Cardiac septum (tissue), 1 donor: ENCODE measurements at regions of chr3 and their contacts with region 1.

Region 1: DNA sequence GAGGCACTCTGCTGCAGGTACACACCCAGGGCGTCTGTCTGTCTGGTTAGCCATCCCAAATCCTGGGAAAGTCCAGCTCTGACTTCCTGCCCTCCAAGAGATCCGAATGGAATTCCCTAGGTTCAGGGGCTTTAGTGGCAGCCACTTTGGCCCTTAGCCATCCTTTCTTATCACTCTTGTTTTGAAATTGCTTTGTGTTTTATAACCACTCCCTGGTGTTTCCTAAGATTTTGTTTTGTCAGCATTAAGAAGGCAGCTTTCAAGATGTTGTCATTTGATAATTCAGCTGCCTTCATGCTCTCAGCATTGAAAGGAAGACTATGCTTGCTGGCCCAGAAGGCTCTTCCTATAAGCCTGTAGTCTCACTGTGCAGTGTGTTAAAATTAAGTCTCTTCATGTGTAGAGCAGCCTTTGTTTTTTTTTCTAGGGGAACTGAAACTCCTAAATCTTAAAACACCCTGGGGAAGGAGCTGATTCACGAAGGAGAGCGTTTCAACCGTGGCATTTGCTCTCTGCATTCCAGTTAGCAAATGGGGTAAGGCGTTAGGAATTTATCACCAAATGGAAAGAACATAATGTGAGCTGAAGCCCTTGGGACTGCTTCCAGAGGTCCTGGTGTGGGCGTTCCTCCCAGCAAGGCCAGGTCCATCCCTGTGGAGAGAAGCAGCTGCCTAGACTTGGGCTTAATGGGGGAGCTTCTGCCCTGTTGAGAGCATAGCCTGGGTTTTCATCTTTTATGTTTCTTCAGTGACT is 14.2 kb upstream of the CLEC3B start:
- DNase-seq: peak; percentile 78

Region 2: GRCh38 chr3:44960387-44961026 is 51.4 kb before region 1 on chr3:
- intact Hi-C with region 1: no loop called
- DNase-seq: no peak

Region 3: DNA sequence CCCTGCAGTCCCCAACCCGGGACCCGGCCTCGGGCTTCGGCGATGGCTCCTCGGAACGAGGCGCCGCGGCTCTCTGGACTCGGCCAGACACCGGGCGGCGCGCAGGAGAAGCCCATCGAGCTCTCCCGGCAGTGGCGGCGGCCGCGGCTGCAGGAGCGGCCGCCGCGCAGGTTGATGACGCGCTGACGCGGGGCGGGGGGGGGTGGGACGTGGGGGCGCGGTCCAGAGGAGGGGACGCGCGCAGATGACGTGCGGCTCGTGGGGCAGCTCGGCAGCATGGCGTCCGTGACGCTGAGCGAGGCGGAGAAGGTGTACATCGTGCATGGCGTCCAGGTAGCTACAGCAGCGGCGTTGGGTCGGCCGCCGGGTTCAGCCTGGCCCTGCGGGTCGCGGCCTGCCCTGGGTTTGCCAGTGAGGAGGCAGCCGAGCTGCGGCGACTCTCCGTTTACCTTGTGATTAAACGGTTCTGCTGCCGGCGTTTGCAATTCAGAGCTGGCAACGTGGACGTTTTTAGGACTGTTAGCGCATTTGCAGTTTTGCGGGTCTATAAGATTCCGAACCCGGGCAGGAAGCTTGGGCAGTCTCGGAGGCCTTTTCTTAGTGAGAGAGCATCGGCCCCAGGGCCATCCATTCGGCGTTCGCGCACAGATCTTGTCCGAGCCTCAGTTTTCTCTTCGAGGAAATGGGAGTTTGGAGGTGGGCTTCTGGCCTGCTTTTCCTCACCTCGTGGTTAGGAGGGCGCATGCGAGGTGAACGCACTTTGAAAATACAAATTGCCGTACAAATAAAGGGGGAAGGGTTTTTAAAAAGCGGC is 35.7 kb before region 1 on chr3 and contains the starts of genes EXOSC7 and ZDHHC3:
- intact Hi-C with region 1: loop called (anchors 5 kb)
- DNase-seq: peak; percentile 93
- total RNA-seq, gene EXOSC7: 29.6 TPM
- total RNA-seq, gene ZDHHC3: 43.8 TPM